ENCODE measurements at regions of chr9 and their contacts with region 1.

Region 1: DNA sequence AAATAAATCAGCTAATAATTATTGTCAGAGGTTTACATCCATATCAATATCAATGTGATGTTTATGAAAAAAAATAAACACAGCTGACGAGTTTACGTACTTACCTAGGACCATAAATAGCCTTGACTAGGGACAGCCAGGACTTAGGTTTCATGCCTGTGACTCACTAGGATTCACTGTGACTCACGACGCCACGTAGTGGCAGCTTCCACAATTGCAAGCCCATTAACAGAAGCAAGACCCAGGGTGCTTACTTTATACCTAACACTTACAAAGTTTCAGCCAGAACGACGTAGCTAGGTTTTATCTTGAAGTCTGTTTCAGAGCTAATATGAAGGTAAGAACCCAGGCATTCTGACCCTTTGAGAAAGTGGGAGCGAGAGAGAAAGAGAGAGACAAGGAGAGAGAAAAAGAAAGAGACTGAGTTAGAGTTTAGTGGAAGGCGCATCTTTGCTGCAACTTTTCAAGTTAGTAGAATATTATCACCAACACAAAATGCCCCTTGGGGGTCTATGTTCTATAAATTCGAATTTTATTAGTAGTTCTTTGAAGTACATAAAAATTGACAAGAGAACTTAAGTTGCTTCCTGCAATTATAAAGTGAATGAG is 191.2 kb downstream of the GNA14 start:
- DNase-seq: peak; percentile 94
- ATAC-seq: peak; percentile 68
- H3K4me3 Mint-ChIP-seq: no peak overlapping the region
- H3K27ac Mint-ChIP-seq: peak overlapping the region; percentile 94; the same call in 1 of the 2 replicates
- H3K4me1 Mint-ChIP-seq: peaks cover 58% of the 10 kb centered on the region
- H3K27me3 Mint-ChIP-seq: no peaks in the 10 kb centered on the region
- CTCF ChIP-seq: peak; percentile 81

Region 2: DNA sequence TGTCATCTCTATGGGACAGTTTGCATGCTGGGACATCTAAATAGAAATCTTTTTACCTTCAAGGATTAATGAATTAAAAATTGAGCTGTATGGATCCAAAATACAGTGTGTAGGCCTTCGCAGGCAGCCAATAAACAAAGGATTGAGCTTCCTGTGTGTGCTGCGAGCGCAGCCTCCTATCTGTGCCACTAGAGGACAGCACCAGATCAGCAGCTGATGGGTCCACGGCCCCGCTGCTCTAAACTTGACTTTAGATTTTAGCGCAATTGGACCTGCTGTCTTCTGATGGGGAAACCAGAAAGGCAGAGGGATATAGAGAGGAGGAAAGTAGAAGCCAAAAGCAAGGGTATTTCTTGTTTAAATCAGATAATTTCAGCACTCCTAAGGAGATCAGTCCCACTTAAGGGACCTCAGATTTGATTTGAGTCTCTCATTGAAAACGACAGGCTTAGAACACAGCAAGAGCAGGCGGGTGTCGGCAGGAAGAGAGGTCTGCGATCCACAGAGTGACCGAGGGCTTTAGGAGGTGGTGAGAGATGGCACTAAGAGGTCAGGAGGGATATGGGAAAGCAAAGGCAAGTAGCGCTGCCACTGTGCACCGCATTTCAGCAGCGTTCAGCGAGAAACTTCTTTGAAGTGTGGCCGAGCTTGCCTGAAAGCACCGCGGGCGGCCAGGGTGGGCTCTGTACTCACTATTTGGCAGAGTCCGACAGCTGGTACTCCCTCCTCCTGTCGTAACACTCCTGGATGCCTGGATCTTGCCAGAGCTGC is 23.1 kb before region 1 on chr9:
- CTCF ChIA-PET with region 1: interaction called, 62 read pairs
- POLR2A ChIA-PET with region 1: interaction called, 3 read pairs
- DNase-seq: peak; percentile 66
- ATAC-seq: peak; percentile 92
- H3K4me3 Mint-ChIP-seq: no peak overlapping the region
- H3K27ac Mint-ChIP-seq: 0 out of 2 replicates have a peak overlapping the region, but pooled peaks have one; percentile 8
- H3K4me1 Mint-ChIP-seq: peaks cover 15% of the 10 kb centered on the region
- H3K27me3 Mint-ChIP-seq: no peaks in the 10 kb centered on the region; the same call in 1 of the 2 replicates
- CTCF ChIP-seq: peak; percentile 87

Region 3: GRCh38 chr9:77440057-77440456 is 16.9 kb before region 1 on chr9:
- CTCF ChIA-PET with region 1: interaction called, 62 read pairs
- POLR2A ChIA-PET with region 1: no interaction called
- DNase-seq: peak; percentile 53
- ATAC-seq: peak; percentile 87
- H3K4me3 Mint-ChIP-seq: peak overlapping the region; percentile 28; the same call in 1 of the 2 replicates
- H3K27ac Mint-ChIP-seq: peak overlapping the region; percentile 63
- H3K4me1 Mint-ChIP-seq: peaks cover 36% of the 10 kb centered on the region
- H3K27me3 Mint-ChIP-seq: no peaks in the 10 kb centered on the region; the same call in 1 of the 2 replicates
- CTCF ChIP-seq: no peak

Region 4: GRCh38 chr9:77469515-77470231 is 12.7 kb after region 1 on chr9:
- CTCF ChIA-PET with region 1: interaction called, 17 read pairs
- POLR2A ChIA-PET with region 1: no interaction called
- DNase-seq: no peak
- ATAC-seq: no peak
- H3K4me3 Mint-ChIP-seq: no peak overlapping the region
- H3K27ac Mint-ChIP-seq: no peak overlapping the region
- H3K4me1 Mint-ChIP-seq: peaks cover 19% of the 10 kb centered on the region
- H3K27me3 Mint-ChIP-seq: no peaks in the 10 kb centered on the region
- CTCF ChIP-seq: no peak

Region 5: GRCh38 chr9:77488439-77489126 is 31.6 kb after region 1 on chr9:
- CTCF ChIA-PET with region 1: interaction called, 20 read pairs
- POLR2A ChIA-PET with region 1: no interaction called
- DNase-seq: peak; percentile 18
- ATAC-seq: peak; percentile 98
- H3K4me3 Mint-ChIP-seq: no peak overlapping the region
- H3K27ac Mint-ChIP-seq: peak overlapping the region; percentile 51; the same call in 1 of the 2 replicates
- H3K4me1 Mint-ChIP-seq: peaks cover 10% of the 10 kb centered on the region; the same call in 1 of the 2 replicates
- H3K27me3 Mint-ChIP-seq: no peaks in the 10 kb centered on the region
- CTCF ChIP-seq: no peak

Region 6: GRCh38 chr9:77648234-77649120 is 191.5 kb after region 1 on chr9 and contains the start of gene GNA14:
- CTCF ChIA-PET with region 1: interaction called, 80 read pairs
- POLR2A ChIA-PET with region 1: no interaction called
- DNase-seq: peak; percentile 75
- ATAC-seq: peak; percentile 59
- H3K4me3 Mint-ChIP-seq: peak within 1 kb of the TSS; percentile 83
- H3K27ac Mint-ChIP-seq: peak within 1 kb of the TSS; percentile 90
- H3K4me1 Mint-ChIP-seq: peaks cover 54% of the 10 kb centered on the region
- H3K27me3 Mint-ChIP-seq: peaks cover 26% of the 10 kb centered on the region
- CTCF ChIP-seq: no peak
- total RNA-seq, gene GNA14: 20.4 to 26.7 TPM (median 21.0 TPM) in 3 replicates

Region 7: GRCh38 chr9:77751341-77752091 is 294.6 kb after region 1 on chr9:
- CTCF ChIA-PET with region 1: interaction called, 26 read pairs
- POLR2A ChIA-PET with region 1: no interaction called
- DNase-seq: no peak
- ATAC-seq: peak; percentile 93
- H3K4me3 Mint-ChIP-seq: no peak overlapping the region
- H3K27ac Mint-ChIP-seq: peak overlapping the region; percentile 64; the same call in 1 of the 2 replicates
- H3K4me1 Mint-ChIP-seq: peaks cover 17% of the 10 kb centered on the region
- H3K27me3 Mint-ChIP-seq: no peaks in the 10 kb centered on the region; the same call in 1 of the 2 replicates
- CTCF ChIP-seq: peak; percentile 27; the same call in 1 of the 2 replicates

Measured in WTC11 (cell line).